Right ventricle myocardium superior (tissue), 1 donor: ENCODE measurements at regions of chr6 and their contacts with region 1.

Region 1: GRCh38 chr6:43516697-43517504 is at the starts of genes POLR1C and YIPF3:
- DNase-seq: peak; percentile 98
- ATAC-seq: peak; percentile 96
- total RNA-seq, gene POLR1C: 15.6 TPM
- total RNA-seq, gene YIPF3: 64.0 TPM

Region 2: GRCh38 chr6:42911171-42912021 is 605.5 kb before region 1 on chr6:
- intact Hi-C with region 1: no loop called
- DNase-seq: no peak
- ATAC-seq: no peak

Region 3: GRCh38 chr6:43369174-43370022 is 147.5 kb before region 1 on chr6 and contains the start of gene ZNF318:
- intact Hi-C with region 1: no loop called
- DNase-seq: peak; percentile 98
- ATAC-seq: peak; percentile 98
- total RNA-seq, gene ZNF318: 10.2 TPM

Region 4: GRCh38 chr6:43559328-43559727 is 42.4 kb after region 1 on chr6:
- intact Hi-C with region 1: loop called (anchors 5 kb)
- DNase-seq: no peak
- ATAC-seq: no peak

Region 5: DNA sequence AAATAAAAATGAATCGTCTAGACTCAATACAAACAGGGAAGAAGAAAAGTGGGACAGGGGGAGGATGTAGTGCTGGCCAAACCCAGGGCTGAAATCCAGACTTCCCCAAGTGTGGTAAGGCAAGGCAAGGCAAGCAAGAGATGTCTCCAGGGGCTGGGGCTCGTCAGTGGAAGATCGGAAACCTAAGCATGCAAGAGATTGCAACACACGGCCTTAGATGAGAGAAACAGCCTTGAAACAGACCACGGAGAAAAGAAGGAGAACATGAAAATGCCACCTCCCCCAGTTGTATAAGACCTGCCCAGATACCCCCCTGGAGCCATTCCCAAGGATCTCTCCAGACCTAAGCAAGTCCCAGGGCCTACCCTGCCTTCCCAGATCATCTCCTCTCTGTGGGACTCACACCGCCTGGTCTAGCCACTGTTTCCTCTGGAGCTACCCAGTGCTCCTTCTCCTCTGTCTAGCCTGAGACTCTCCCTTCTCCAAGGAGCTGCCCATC is 273.2 kb after region 1 on chr6:
- intact Hi-C with region 1: no loop called
- DNase-seq: peak; percentile 82
- ATAC-seq: peak; percentile 59